Activated CD8-positive, alpha-beta T cell treated with anti-CD3 and anti-CD28 coated beads, Interleukin-2, amount 10 ng/mL, durations not matched to agents 7 days and 5 days (primary cell): ENCODE measurements at regions of chr1 and their contacts with region 1.

Region 1: GRCh38 chr1:205658943-205659581 is 21.2 kb downstream of the SLC45A3 start:
- DNase-seq: peak; percentile 82
- ATAC-seq: peak; percentile 93
- H3K4me3 Mint-ChIP-seq: no peak overlapping the region
- H3K27ac Mint-ChIP-seq: no peak overlapping the region
- H3K4me1 Mint-ChIP-seq: no peaks in the 10 kb centered on the region
- H3K27me3 Mint-ChIP-seq: peaks cover 5% of the 10 kb centered on the region

Region 2: GRCh38 chr1:205485338-205486228 is 173.5 kb before region 1 on chr1:
- CTCF ChIA-PET with region 1: interaction called, 44 read pairs
- POLR2A ChIA-PET with region 1: no interaction called
- DNase-seq: peak; percentile 77
- ATAC-seq: peak; percentile 73
- H3K4me3 Mint-ChIP-seq: no peak overlapping the region
- H3K27ac Mint-ChIP-seq: no peak overlapping the region
- H3K4me1 Mint-ChIP-seq: peaks cover 30% of the 10 kb centered on the region
- H3K27me3 Mint-ChIP-seq: peaks cover 37% of the 10 kb centered on the region

Region 3: DNA sequence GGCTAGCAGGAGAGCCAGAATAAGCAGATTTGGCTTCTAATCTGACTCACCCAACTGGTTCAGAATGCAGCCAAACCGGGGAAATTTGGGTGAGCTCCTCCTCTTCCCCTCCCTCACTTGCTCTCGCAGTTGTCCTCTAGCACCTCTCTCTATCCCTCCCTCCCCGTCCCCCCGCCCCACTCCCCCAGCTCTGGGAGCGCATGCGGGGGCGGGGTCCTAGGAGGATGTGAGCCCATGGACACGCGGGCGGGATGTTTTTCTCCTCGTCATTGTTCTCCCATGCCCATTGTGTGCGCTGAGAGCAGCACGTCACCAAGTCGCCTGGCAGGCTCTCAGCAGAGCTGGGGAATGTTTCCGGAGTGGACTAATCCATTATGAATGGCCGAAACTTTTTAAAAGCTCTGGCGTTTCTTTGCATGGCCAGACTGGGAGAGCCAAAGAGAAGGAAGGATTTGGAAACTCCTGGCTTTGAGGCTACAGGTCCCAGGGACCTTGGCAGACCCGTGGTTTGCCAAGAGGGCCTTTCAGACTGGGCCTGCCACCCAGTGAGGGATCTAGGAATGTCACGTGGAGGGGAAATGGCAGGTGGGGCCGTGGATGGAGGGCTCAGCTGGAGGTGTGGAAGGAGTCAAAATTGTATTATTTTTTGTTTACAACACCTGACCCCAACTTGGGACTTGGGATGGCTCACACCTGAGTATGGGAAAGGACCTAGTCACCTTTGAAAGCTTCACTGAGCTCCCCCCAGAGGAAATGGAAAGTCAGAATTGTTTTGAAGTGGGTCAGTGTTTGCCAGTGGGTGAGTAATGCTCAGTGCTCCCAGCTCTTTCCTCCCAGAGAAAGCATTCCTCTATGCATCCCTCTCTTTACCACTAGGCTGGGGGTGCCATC is 115.4 kb before region 1 on chr1:
- CTCF ChIA-PET with region 1: interaction called, 29 read pairs
- POLR2A ChIA-PET with region 1: no interaction called
- DNase-seq: peak; percentile 31
- ATAC-seq: peak; percentile 30
- H3K4me3 Mint-ChIP-seq: no peak overlapping the region
- H3K27ac Mint-ChIP-seq: no peak overlapping the region
- H3K4me1 Mint-ChIP-seq: peaks cover 10% of the 10 kb centered on the region
- H3K27me3 Mint-ChIP-seq: peaks cover 39% of the 10 kb centered on the region

Region 4: DNA sequence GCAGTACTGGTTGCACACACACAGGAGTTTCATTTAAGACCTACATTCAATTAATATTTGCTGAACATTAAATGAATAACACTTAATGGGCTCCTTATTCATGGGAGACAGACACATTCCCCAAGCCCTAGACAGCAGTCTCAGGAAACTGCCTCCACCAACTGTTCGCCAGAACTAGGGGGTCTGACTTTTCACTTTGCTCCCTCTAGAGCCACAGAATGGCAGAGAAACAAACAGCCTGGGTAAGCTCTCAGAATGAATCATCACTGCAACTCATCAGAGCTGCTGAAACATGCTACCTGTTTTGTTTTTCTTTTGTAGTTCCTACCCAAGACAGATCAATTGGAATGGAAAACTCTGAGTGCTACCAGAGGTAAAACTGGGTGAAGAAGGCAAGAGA is 59.0 kb before region 1 on chr1:
- CTCF ChIA-PET with region 1: interaction called, 444 read pairs
- POLR2A ChIA-PET with region 1: no interaction called
- DNase-seq: peak; percentile 37
- ATAC-seq: peak; percentile 71
- H3K4me3 Mint-ChIP-seq: no peak overlapping the region
- H3K27ac Mint-ChIP-seq: peak overlapping the region; percentile 62
- H3K4me1 Mint-ChIP-seq: peaks cover 27% of the 10 kb centered on the region
- H3K27me3 Mint-ChIP-seq: no peaks in the 10 kb centered on the region

Region 5: DNA sequence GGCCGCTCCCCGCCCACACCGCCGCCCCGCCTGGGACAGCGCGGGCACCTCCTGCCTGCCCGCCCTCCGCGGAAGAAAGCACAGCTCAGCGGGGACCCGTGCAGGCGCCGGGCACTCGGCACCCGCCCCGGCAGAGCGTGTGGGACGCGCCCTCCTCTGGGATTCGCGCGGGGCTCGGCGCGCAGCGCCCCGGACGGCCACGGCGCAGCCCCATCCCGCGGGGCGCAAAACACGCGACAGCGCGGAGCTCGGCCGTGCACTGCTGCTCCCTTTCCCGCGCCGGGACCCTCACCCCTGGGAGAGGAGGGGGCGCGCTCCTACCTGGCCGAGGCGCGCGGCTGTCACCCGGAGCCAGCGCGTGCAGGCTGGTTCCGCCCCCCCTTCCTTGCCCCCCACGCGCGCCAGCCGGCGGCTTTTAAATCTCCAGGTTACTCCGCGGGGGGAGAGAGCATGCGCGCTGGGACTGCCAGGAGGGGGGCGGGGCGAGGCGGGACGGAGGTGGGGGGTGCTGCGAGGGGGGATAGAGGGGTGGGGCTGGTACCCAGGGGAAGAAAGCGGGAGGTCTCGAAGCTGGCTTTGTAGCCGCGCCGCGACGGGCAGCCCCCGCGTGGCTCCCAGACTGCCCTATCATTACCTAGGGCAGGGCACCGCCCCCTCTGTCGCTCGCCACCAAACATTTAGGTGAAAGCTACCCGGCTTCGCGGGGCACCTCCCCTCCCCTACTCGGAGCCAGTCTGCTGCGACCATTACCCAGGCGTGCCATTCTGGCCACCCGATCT is 21.2 kb after region 1 on chr1 and contains the start of gene SLC45A3:
- CTCF ChIA-PET with region 1: interaction called, 52 read pairs
- POLR2A ChIA-PET with region 1: no interaction called
- DNase-seq: peak; percentile 29
- ATAC-seq: peak; percentile 87
- H3K4me3 Mint-ChIP-seq: peak within 1 kb of the TSS; percentile 75
- H3K27ac Mint-ChIP-seq: no peak within 1 kb of the TSS
- H3K4me1 Mint-ChIP-seq: peaks cover 9% of the 10 kb centered on the region
- H3K27me3 Mint-ChIP-seq: peaks cover 23% of the 10 kb centered on the region
- total RNA-seq, gene SLC45A3: 0.18 to 0.21 TPM

Region 6: DNA sequence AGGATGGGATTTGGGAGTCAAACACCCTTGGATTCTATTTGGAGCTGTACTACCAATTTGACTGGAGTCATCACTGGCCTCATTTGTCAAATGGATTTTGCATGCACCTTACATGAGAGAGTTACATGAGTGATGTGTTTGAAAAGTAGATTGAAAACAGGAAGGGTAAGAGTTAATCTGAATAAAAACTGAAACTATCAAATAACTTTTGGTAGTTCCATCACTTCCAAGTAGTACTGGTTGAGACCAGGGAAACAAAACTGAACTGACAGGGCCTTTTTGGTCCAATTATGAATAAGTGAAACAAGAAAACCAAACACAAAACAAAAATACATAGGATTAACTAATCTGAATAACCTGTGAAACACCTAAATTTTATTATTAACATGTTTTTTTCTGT is 60.7 kb after region 1 on chr1:
- CTCF ChIA-PET with region 1: interaction called, 231 read pairs
- POLR2A ChIA-PET with region 1: no interaction called
- DNase-seq: no peak
- ATAC-seq: no peak
- H3K4me3 Mint-ChIP-seq: no peak overlapping the region
- H3K27ac Mint-ChIP-seq: no peak overlapping the region
- H3K4me1 Mint-ChIP-seq: peaks cover 8% of the 10 kb centered on the region
- H3K27me3 Mint-ChIP-seq: no peaks in the 10 kb centered on the region

Region 7: DNA sequence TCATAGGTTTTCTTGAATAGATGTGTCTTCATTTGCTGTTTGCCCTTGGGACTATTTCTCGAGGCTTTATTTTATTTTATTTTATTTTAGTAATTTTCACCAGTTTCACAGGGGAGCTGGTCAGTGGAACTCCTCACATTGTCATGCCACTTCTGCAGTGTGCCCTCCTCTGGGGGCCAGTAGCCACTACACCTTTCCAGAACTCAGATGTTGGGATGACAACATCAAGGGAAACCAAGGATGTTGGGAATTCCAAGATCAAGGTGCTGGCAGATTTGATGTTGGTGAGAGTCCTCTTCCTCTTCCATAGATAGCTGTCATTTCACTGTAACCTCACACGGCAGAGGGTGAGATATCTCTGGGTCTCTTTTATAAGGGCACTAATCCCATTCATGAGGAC is 248.7 kb after region 1 on chr1:
- CTCF ChIA-PET with region 1: interaction called, 11 read pairs
- POLR2A ChIA-PET with region 1: no interaction called
- DNase-seq: no peak
- ATAC-seq: no peak
- H3K4me3 Mint-ChIP-seq: no peak overlapping the region
- H3K27ac Mint-ChIP-seq: no peak overlapping the region
- H3K4me1 Mint-ChIP-seq: no peaks in the 10 kb centered on the region
- H3K27me3 Mint-ChIP-seq: peaks cover 22% of the 10 kb centered on the region